Activated T-helper 1 cell treated with anti-CD3 and anti-CD28 coated beads, Interleukin-12 subunit alpha, Interleukin-12 subunit beta, Interleukin-2, Interleukin-4 antibody, amounts not matched to agents 30 ng/mL and 10 ng/mL and 1 ng/mL, durations not matched to agents 14 hours and 24 hours and 36 hours (primary cell): ENCODE measurements at regions of chr17 and their contacts with region 1.

Region 1: DNA sequence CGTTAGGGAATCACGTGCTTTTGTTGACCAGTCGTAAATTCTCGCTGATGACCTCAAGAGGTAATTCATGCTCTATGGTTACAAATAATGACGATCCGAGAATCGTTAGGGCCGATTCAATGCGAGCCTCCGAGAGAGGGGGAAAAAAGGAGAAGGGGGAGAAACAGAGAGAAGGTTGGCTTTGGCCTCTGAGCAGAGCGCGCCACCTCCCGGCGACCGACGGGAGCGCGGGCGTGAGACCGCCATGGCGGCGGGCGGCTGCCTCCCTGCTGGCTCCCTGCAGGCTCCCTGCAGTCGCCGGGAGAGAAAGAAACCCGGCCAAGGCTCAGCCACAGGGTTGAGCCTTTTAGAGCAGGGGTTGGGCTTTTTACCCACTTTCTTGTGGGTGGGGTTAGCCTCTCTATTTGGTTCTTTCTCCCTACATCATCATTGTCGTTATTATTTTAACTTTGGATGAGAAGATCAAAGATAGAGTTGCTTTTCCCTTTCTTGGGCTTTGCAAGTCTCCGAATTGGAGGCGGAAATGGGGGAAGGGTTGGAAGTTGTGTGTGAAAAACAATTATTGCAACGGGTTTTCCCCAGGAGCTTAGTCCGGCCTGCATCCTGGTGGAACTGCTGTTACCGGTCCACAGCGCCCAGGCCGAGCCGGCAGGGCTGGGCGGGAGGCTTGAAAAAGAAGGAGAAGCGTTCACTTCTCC is 410 bp upstream of the HOXB5 start:
- DNase-seq: peak; percentile 79
- H3K4me3 Mint-ChIP-seq: peak overlapping the region; percentile 82
- H3K27ac Mint-ChIP-seq: no peak overlapping the region
- H3K4me1 Mint-ChIP-seq: peaks cover 59% of the 10 kb centered on the region
- H3K27me3 Mint-ChIP-seq: peaks cover 75% of the 10 kb centered on the region

Region 2: GRCh38 chr17:48131216-48131824 is 462.7 kb before region 1 on chr17:
- intact Hi-C with region 1: loop called (anchors 10 kb)
- DNase-seq: peak; percentile 41
- H3K4me3 Mint-ChIP-seq: no peak overlapping the region
- H3K27ac Mint-ChIP-seq: no peak overlapping the region
- H3K4me1 Mint-ChIP-seq: peaks cover 11% of the 10 kb centered on the region
- H3K27me3 Mint-ChIP-seq: no peaks in the 10 kb centered on the region

Region 3: GRCh38 chr17:48175692-48176470 is 418.1 kb before region 1 on chr17:
- intact Hi-C with region 1: no loop called
- DNase-seq: no peak
- H3K4me3 Mint-ChIP-seq: no peak overlapping the region
- H3K27ac Mint-ChIP-seq: no peak overlapping the region
- H3K4me1 Mint-ChIP-seq: peaks cover 24% of the 10 kb centered on the region
- H3K27me3 Mint-ChIP-seq: no peaks in the 10 kb centered on the region

Region 4: DNA sequence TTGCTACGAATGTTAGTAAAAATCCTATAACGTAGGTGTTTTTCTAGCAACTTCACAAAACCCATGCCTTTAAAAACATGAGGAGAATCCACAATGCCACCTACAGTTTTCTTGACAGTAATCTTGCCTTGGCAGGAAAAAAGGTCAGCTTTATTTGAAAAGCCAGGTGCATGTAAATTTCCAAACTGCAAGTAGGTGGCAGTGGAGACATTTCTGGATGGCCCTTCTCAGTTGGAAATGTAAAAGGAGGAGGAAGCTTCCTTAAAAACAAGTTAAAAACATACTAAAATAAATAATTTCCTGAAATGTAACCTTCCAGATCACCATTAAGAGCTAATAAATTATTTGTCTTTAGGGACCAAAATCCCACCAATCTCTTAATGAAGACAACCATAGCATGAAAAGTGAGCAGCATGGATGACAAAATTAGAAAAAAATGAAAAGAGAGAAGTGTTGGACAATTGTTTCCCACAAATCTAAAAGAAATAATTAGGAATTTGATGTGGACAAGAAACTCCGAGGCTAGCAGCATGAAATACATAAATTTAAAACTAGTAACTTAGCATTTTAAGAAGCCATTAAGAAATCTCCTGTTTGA is 334.2 kb before region 1 on chr17:
- intact Hi-C with region 1: loop called (anchors 2 kb)
- DNase-seq: no peak
- H3K4me3 Mint-ChIP-seq: no peak overlapping the region
- H3K27ac Mint-ChIP-seq: no peak overlapping the region
- H3K4me1 Mint-ChIP-seq: peaks cover 6% of the 10 kb centered on the region
- H3K27me3 Mint-ChIP-seq: no peaks in the 10 kb centered on the region

Region 5: DNA sequence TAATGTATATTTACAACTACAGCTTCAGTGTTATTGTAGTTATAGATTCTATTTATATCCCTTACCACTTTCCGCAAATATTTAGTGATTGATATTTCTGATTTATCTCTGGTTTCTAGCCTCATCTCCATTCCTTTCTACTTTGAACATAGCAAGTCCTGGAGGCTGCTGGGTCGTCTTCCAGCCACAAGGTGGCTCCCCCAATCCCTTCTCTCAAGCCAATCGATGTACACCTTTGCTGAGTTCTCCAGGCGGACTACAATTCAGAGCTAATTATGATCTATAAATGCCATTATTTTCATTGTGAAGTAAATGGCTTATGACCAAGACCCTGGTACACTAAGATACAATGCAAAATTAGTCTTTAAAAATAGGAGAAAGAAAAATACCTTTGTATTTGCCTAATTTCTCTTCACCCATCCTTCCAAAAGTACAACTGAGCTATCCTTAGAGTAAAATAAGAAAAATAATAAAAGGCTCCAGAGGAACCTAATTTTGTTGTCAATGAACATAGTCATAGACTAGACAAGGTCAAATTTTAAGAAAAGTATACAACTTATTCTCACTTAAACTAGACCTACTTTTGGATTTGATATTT is 286.1 kb before region 1 on chr17:
- intact Hi-C with region 1: loop called (anchors 2 kb)
- DNase-seq: no peak
- H3K4me3 Mint-ChIP-seq: no peak overlapping the region
- H3K27ac Mint-ChIP-seq: no peak overlapping the region
- H3K4me1 Mint-ChIP-seq: peaks cover 6% of the 10 kb centered on the region
- H3K27me3 Mint-ChIP-seq: no peaks in the 10 kb centered on the region

Region 6: DNA sequence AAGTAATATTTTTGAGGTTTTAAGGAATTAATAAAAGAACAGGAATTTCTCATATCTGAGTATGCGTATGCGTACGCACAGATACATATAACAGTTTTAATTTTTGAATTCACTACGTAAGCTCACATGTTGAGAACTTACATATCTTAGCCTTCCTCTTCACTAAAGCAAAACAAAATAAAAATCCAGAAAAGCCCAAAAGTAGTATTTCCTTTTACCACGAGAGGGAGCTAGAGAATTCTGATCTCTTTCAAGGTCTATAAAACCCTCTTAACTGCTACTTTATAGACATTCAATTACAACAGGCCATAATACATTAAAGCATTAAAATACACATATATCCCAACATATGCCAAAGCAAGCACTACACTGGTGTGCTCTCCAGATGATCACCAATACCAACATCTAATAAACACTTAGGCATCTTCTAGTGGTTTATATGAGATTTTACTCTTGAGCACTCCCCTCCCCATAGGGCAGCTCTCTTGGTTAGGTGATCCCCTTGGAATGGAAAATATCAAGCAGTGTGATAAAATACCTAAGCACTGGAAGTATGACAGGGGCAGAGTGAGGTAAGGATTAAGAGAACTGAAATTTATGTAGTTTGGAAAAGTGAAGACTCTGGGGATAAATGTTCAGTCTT is 258.0 kb before region 1 on chr17:
- intact Hi-C with region 1: loop called (anchors 1 kb)
- DNase-seq: no peak
- H3K4me3 Mint-ChIP-seq: no peak overlapping the region
- H3K27ac Mint-ChIP-seq: no peak overlapping the region
- H3K4me1 Mint-ChIP-seq: peaks cover 16% of the 10 kb centered on the region
- H3K27me3 Mint-ChIP-seq: no peaks in the 10 kb centered on the region

Region 7: DNA sequence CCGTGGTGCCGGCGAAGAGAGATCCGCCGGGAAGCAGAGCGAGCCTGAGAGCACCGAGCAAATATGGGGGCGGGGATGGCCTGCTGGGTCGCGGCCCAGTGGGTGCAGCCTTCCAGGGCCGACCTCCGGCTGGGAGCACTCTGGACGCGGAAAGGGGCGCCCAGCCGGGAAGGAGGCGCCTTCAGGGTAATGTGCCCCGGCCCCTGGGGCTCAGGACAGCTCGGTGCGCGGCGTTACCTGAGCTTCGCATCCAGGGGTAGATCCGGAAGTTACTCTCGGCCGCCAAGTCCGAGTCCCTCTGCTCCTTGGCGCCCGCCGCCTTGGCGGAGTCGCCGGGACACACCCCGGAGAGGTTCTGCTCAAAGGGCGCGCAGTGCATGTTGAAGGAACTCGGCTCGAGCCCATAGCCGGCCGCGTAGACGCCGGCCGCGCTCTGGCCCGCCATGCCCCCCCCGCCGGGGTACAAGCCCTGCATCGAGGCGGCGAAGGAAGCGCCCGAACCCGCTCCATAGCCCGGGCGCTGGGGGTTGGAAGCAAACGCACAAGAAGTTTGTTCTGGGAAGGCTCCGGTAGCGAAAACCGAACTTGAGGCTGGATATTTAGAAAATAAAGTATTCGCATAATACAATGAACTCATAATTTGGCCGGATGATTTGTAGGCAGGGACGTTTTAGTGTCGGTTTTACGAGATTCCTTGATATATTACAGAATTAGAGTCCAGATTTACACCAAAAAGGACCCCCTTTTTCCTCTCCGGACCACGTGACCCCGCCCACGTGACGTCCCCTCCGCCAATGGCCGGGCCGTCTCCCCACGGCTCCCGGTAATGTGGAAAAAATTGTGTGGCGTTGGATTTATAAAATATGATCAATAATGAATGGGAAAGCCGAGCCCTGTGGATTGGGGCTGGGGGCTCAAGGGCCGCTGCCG is 16.6 kb after region 1 on chr17 and contains the start of gene HOXB7:
- intact Hi-C with region 1: loop called (anchors 2 kb)
- DNase-seq: peak; percentile 49
- H3K4me3 Mint-ChIP-seq: peak within 1 kb of the TSS; percentile 86
- H3K27ac Mint-ChIP-seq: peak within 1 kb of the TSS; percentile 32
- H3K4me1 Mint-ChIP-seq: peaks cover 34% of the 10 kb centered on the region
- H3K27me3 Mint-ChIP-seq: peaks cover 76% of the 10 kb centered on the region
- total RNA-seq, gene HOXB7: 0.49 and 0.51 TPM in 2 replicates

Region 8: GRCh38 chr17:48625495-48626244 is 31.7 kb after region 1 on chr17:
- intact Hi-C with region 1: no loop called
- DNase-seq: no peak
- H3K4me3 Mint-ChIP-seq: peak overlapping the region; percentile 85
- H3K27ac Mint-ChIP-seq: peak overlapping the region; percentile 66
- H3K4me1 Mint-ChIP-seq: peaks cover 11% of the 10 kb centered on the region
- H3K27me3 Mint-ChIP-seq: peaks cover 87% of the 10 kb centered on the region